ENCODE measurements at regions of chr1 and their contacts with region 1.

Region 1: GRCh38 chr1:161766102-161766981 is at the start of gene ATF6:
- DNase-seq: peak; percentile 55 to 84 (median 77)
- ATAC-seq: peak; percentile 88
- H3K4me3 ChIP-seq: peak within 1 kb of the TSS; percentile 100
- H3K4me3 Mint-ChIP-seq: peak within 1 kb of the TSS; percentile 96 to 100 (median 99)
- H3K27ac ChIP-seq: peak within 1 kb of the TSS; percentile 93
- H3K27ac Mint-ChIP-seq: peak within 1 kb of the TSS; percentile 96 to 99 (median 98)
- H3K4me1 ChIP-seq: peaks cover 21 to 26% of the 10 kb centered on the region in 2 donors
- H3K4me1 Mint-ChIP-seq: peaks cover 24 to 53% (median 43%) of the 10 kb centered on the region in 7 donors
- H3K27me3 ChIP-seq: no peaks in the 10 kb centered on the region
- H3K27me3 Mint-ChIP-seq: no peaks in the 10 kb centered on the region
- total RNA-seq, gene ATF6: 22.4 to 27.5 (median 26.9) TPM

Region 2: DNA sequence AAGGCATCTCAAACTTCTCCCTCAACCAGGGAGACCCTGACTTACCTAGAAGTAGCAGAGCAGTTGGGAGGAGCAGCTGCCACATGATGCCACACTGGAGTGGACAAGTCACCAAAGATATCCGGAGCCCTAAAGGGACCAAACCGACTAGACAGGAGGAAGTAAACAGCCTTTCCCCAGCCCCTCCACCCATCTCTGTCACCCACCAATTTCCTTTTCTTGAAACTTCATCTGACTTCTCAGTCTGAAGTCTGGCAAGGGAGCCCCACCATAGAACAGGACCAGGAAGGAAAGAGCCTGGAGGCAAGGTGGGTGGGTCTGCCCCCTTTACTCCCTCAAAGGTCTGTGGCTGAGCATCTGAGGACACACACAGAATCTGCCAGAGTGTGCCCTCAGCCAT is 216.7 kb before region 1 on chr1 and contains the start of gene FCGR3A:
- CTCF ChIA-PET with region 1: no interaction called
- POLR2A ChIA-PET with region 1: no interaction called
- intact Hi-C with region 1: no loop called
- DNase-seq: no peak
- ATAC-seq: peak; percentile 46
- H3K4me3 ChIP-seq: no peak within 1 kb of the TSS
- H3K4me3 Mint-ChIP-seq: peak within 1 kb of the TSS in 1 of 10 donors; percentile 77
- H3K27ac ChIP-seq: no peak within 1 kb of the TSS
- H3K27ac Mint-ChIP-seq: peak within 1 kb of the TSS in 1 of 9 donors; percentile 17
- H3K4me1 ChIP-seq: peaks cover 0 to 21% of the 10 kb centered on the region in 2 donors
- H3K4me1 Mint-ChIP-seq: peaks cover 5 to 16% (median 7%) of the 10 kb centered on the region in 7 donors
- H3K27me3 ChIP-seq: no peaks in the 10 kb centered on the region
- H3K27me3 Mint-ChIP-seq: peaks cover 0 to 5% (median 0%) of the 10 kb centered on the region in 5 donors
- total RNA-seq, gene FCGR3A: 1.5 to 190 (median 9.3) TPM in 4 of 5 experiments, not detected in the other

Region 3: GRCh38 chr1:161749509-161750407 is 16.6 kb before region 1 on chr1 and contains the start of gene DUSP12:
- CTCF ChIA-PET with region 1: interaction called, 5 read pairs
- POLR2A ChIA-PET with region 1: interaction called, 10 read pairs
- intact Hi-C with region 1: loop called (anchors 1 kb)
- DNase-seq: peak; percentile 69 to 86 (median 83)
- ATAC-seq: peak; percentile 99
- H3K4me3 ChIP-seq: peak within 1 kb of the TSS; percentile 86
- H3K4me3 Mint-ChIP-seq: peak within 1 kb of the TSS; percentile 96 to 100 (median 99)
- H3K27ac ChIP-seq: peak within 1 kb of the TSS; percentile 74
- H3K27ac Mint-ChIP-seq: peak within 1 kb of the TSS; percentile 83 to 99 (median 96)
- H3K4me1 ChIP-seq: peaks cover 10 to 12% of the 10 kb centered on the region in 2 donors
- H3K4me1 Mint-ChIP-seq: peaks cover 32 to 50% (median 43%) of the 10 kb centered on the region in 7 donors
- H3K27me3 ChIP-seq: no peaks in the 10 kb centered on the region
- H3K27me3 Mint-ChIP-seq: peaks cover 0 to 24% (median 5%) of the 10 kb centered on the region in 5 donors
- total RNA-seq, gene DUSP12: 16.1 to 31.4 (median 24.1) TPM

Region 4: GRCh38 chr1:162035241-162035640 is 268.9 kb after region 1 on chr1:
- CTCF ChIA-PET with region 1: interaction called, 38 read pairs
- POLR2A ChIA-PET with region 1: no interaction called
- intact Hi-C with region 1: loop called (anchors 1 kb)
- DNase-seq: no peak
- ATAC-seq: no peak
- H3K4me3 ChIP-seq: no peak overlapping the region
- H3K4me3 Mint-ChIP-seq: no peak overlapping the region
- H3K27ac ChIP-seq: no peak overlapping the region
- H3K27ac Mint-ChIP-seq: no peak overlapping the region
- H3K4me1 ChIP-seq: no peaks in the 10 kb centered on the region
- H3K4me1 Mint-ChIP-seq: peaks cover 0 to 10% (median 0%) of the 10 kb centered on the region in 7 donors
- H3K27me3 ChIP-seq: no peaks in the 10 kb centered on the region
- H3K27me3 Mint-ChIP-seq: peaks cover under 1 to 25% (median 13%) of the 10 kb centered on the region in 5 donors

Region 5: DNA sequence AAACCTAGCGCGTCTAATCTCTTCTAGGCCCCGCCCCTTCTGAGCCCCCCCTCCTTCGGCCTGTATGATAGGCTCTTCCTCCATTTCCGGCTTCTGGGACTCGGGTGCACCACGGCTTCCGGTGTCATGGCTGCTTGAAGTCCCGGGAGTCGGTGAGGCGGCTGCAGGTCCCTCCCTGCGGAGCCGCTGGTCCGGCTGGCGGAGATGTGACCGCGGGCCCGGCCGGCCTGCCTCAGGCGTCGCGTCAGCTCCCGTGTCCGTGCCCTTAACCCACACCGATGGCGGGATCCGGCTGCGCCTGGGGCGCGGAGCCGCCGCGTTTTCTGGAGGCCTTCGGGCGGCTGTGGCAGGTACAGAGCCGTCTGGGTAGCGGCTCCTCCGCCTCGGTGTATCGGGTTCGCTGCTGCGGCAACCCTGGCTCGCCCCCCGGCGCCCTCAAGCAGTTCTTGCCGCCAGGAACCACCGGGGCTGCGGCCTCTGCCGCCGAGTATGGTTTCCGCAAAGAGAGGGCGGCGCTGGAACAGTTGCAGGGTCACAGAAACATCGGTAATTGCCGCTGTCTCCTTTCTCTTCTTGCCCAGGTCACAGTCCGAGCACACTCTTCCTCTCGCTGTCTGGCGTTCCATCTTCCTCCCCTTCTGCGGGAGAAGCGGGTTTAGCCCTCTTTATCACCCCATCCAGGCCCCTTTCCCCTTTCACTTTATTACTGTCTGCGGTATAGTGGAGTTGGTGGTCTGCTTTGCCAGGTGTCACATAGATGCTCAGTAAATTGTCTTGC is 731.6 kb after region 1 on chr1 and contains the start of gene UHMK1:
- CTCF ChIA-PET with region 1: no interaction called
- POLR2A ChIA-PET with region 1: no interaction called
- intact Hi-C with region 1: loop called in 1 of 2 experiments (anchors 5 kb)
- DNase-seq: peak; percentile 66 to 93 (median 90)
- ATAC-seq: peak; percentile 99
- H3K4me3 ChIP-seq: peak within 1 kb of the TSS; percentile 81
- H3K4me3 Mint-ChIP-seq: peak within 1 kb of the TSS; percentile 83 to 99 (median 92)
- H3K27ac ChIP-seq: peak within 1 kb of the TSS; percentile 90
- H3K27ac Mint-ChIP-seq: peak within 1 kb of the TSS; percentile 88 to 98 (median 94)
- H3K4me1 ChIP-seq: peaks cover 17 to 19% of the 10 kb centered on the region in 2 donors
- H3K4me1 Mint-ChIP-seq: peaks cover 22 to 55% (median 45%) of the 10 kb centered on the region in 7 donors
- H3K27me3 ChIP-seq: no peaks in the 10 kb centered on the region
- H3K27me3 Mint-ChIP-seq: peaks cover 0 to 5% (median 0%) of the 10 kb centered on the region in 5 donors
- total RNA-seq, gene UHMK1: 47.1 to 69.9 (median 66.6) TPM

Measured in naive thymus-derived CD4-positive, alpha-beta T cell (primary cell).